Endothelial cell of umbilical vein (primary cell): ENCODE measurements at regions of chrX and their contacts with region 1.

Region 1: DNA sequence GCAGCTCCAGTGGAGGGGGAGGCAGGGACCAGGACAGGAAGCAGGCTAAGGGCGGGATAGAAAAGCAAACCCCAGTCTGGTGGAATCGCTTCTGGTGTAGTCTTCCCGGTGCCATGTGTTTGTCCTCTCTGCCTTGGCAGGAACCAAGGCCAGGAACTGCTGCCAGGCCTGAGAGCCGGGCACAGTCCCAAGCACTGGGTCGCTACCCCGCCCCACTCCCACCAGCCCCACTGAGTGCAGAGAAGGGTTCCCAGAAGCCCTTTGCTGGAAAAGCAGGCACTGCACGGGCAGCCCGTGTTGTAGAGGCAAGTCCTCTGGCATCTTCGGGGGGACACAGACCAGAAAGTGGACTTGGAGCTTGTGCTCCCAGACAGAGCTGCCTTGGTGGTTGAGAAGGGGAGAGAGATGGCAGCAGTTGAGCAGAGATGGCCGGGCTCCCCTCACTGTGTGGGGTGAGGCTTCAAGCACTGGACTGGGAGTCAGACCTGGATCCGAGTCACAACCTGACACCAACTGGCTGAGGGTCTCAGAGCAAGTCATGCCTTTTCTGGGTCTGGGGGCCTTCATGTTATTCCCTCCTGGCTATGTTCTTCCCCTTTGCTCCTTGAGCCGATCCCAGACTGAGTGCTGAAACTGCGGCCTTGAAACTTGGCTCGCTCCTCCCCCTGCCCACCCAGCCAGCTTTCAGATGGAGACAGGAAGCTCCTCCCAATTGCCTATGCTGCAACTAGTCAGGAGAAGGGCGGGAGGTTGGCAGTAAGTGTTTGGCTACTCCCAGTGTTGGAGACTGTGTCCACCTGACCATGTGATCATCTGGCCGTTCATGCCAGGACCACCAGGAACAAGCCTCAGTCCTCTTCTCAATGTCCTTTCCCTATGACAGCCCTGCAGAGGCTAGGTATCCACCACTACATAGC is 59.7 kb upstream of the MTM1 start:
- DNase-seq: peak; percentile 61
- H3K4me3 ChIP-seq: no peak overlapping the region
- H3K27ac ChIP-seq: peak overlapping the region; percentile 89
- H3K4me1 ChIP-seq: peaks cover 56% of the 10 kb centered on the region
- H3K27me3 ChIP-seq: no peaks in the 10 kb centered on the region
- CTCF ChIP-seq: no peak
- POLR2A ChIP-seq: no peak

Region 2: DNA sequence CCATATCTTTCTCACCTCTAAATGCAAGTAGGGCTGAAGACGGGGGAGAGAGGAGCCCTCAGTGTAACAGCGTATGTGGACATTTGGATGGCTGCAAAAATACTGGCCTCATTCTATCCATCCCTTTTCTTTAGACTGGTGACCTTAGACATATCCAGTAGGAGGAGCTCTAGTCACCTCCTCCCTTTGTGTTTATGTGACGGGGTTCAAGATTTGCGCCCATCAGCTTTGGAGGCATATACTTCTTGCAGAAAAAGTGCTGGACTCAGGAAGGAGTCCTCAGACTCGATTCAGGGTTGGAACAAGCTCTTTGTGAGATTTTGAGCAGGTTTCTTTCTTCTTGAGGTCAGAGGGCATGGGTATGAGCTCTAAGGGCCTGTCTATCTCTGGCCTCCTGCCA is 59.4 kb before region 1 on chrX:
- CTCF ChIA-PET with region 1: no interaction called
- POLR2A ChIA-PET with region 1: no interaction called
- dilution Hi-C with region 1: no loop called
- intact Hi-C with region 1: loop called (anchors 5 kb)
- DNase-seq: no peak
- H3K4me3 ChIP-seq: no peak overlapping the region
- H3K27ac ChIP-seq: no peak overlapping the region
- H3K4me1 ChIP-seq: peaks cover 13% of the 10 kb centered on the region
- H3K27me3 ChIP-seq: no peaks in the 10 kb centered on the region
- CTCF ChIP-seq: no peak
- POLR2A ChIP-seq: no peak

Region 3: DNA sequence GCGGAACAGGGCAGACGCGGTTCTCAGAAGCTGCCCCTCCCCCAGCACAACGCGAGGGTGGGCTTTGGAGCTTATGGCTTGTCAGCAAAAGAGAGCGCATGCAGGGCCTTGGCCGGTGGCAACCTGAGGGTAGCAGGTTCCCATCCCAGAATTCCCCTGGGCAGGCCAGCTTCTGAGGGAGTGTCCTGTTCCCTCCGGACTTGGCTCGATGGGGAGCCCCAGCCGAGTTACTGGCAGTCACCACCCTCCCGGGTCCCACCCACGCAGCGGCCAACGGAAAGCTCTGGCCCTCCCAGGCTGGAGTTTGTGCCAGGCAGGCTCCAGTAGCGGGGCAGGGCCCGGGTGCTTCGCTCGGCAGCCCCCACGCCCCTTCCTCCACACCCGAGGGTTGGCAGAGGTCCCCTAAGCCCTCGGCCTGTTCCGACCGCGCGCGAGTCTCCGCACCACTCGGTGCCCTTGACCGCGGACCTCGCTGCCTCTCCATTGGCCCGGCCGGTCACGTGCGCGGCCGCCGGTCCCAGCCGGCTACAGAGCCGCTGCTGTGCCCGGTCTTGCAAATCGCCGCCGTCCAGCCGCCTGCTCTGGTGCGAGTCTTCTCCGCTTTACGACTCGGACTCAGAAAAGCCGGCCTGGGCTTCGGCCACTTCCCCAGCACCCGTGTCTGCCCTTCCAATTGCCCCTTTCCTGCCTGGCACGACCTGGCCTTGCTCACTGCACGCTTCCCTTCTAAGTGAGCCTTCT is 38.8 kb after region 1 on chrX:
- CTCF ChIA-PET with region 1: no interaction called
- POLR2A ChIA-PET with region 1: no interaction called
- dilution Hi-C with region 1: no loop called
- intact Hi-C with region 1: loop called (anchors 2 kb)
- DNase-seq: peak; percentile 47
- H3K4me3 ChIP-seq: peak overlapping the region in 1 of 3 experiments; percentile 14
- H3K27ac ChIP-seq: no peak overlapping the region
- H3K4me1 ChIP-seq: peaks cover 9% of the 10 kb centered on the region
- H3K27me3 ChIP-seq: no peaks in the 10 kb centered on the region
- CTCF ChIP-seq: no peak
- POLR2A ChIP-seq: no peak

Region 4: GRCh38 chrX:150587585-150588503 is 79.1 kb after region 1 on chrX:
- CTCF ChIA-PET with region 1: interaction called, 5 read pairs
- POLR2A ChIA-PET with region 1: no interaction called
- dilution Hi-C with region 1: no loop called
- intact Hi-C with region 1: loop called (anchors 5 kb)
- DNase-seq: peak; percentile 35
- H3K4me3 ChIP-seq: no peak overlapping the region
- H3K27ac ChIP-seq: no peak overlapping the region
- H3K4me1 ChIP-seq: no peaks in the 10 kb centered on the region
- H3K27me3 ChIP-seq: no peaks in the 10 kb centered on the region
- CTCF ChIP-seq: peak; percentile 40 to 51
- POLR2A ChIP-seq: no peak

Region 5: GRCh38 chrX:150715184-150715583 is 206.5 kb after region 1 on chrX:
- CTCF ChIA-PET with region 1: no interaction called
- POLR2A ChIA-PET with region 1: no interaction called
- dilution Hi-C with region 1: no loop called
- intact Hi-C with region 1: loop called (anchors 5 kb)
- DNase-seq: peak; percentile 16
- H3K4me3 ChIP-seq: no peak overlapping the region
- H3K27ac ChIP-seq: peak overlapping the region; percentile 18
- H3K4me1 ChIP-seq: peaks cover 3% of the 10 kb centered on the region
- H3K27me3 ChIP-seq: no peaks in the 10 kb centered on the region
- CTCF ChIP-seq: no peak
- POLR2A ChIP-seq: no peak